ENCODE measurements at regions of chr6 and their contacts with region 1.

Region 1: GRCh38 chr6:15691250-15691869 is 28.5 kb upstream of the DTNBP1 start:
- DNase-seq: peak; percentile 73 to 94 (median 88)

Region 2: GRCh38 chr6:15621203-15622044 is 69.9 kb before region 1 on chr6:
- intact Hi-C with region 1: no loop called
- DNase-seq: peak in 17 of 42 donors; percentile 10 to 57 (median 33)

Region 3: DNA sequence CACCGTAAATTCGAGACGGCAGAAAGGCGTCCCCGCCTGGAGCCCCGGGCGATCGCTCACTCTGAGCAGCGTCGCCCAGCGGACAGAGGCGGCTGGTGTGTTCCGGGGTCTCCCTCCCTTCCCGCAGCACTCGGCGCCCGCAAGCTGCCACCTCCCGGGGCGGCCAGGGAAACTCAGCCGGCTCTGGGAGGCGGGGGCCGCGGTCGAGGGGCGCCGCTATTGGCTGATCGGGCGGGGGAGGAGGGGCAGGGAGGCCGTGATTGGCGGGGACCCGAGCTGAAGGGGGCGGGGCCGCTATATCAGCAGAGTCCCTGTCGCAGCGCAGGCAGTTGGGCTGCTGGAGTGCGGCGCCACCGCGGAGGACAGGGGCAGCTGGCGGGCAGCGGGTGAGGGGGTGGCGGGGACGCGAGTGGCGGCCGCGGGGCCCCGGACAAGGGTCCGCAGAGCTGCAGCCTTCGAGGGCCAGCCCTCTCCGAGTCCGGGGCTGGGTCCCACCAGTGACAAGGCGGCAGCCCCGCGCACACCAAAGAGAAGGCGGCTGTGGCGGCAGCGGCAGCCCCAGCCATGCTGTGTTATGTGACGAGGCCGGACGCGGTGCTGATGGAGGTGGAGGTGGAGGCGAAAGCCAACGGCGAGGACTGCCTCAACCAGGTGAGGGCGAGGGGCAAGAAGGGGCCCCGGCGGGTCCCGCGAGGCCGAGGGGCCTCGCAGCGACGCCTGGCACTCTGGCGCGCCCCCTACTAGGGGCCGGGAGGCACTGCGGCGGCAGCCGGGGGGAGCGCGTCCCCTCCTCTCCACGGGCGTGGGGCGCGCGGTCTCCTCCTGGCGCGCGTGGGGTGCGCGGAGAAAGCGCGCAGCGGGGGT is 437.6 kb after region 1 on chr6 and contains the start of gene MYLIP:
- intact Hi-C with region 1: loop called (anchors 5 kb)
- DNase-seq: peak; percentile 96 to 100 (median 99)

Region 4: DNA sequence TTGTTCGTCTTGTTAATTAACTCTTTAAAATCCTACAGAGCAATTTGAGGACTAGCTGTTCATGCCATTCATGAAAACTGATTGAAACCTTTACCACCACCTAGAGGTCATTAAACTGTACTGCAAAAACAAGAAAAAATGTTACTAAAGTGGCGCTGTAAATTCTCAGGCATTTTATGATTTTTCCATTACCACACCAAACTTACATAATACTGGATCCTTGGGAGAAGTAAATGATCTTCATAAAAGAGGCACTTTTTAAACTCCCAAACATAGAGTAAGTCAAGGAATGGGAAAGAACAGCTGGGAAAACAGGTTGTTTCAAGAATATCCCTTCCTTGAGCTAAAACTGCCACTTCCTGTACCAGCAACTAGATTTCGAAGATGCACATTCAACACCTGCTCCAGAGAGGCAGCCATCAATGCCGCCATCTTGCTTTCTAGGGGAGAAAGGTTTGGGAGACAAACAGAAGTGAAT is 491.9 kb after region 1 on chr6:
- intact Hi-C with region 1: loop called (anchors 5 kb)
- DNase-seq: no peak

Region 5: DNA sequence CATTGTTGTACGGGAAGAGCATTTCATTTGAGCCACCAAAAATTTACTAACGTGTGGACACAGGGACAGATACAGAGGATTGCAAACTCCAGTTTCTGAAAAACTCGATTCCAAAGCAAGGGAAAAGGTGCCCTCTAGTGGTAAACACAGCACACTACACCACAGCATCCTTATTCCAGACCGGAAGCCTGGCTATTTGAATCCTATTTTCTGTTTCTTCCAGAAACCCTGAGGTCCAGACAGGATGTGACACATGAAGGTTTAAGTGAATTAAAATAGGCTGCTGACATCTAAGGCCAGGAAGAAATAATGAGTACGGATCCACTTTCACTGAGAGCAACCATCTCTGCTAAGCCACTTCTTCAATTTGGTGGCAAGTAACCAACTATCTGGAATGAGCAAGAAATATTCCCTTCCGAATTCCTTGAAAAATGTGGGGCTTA is 515.3 kb after region 1 on chr6:
- intact Hi-C with region 1: loop called (anchors 2 kb)
- DNase-seq: peak in 35 of 42 donors; percentile 21 to 89 (median 68)

Measured in head of caudate nucleus (tissue), 42 donors.